Activated CD4-positive, alpha-beta T cell treated with anti-CD3 and anti-CD28 coated beads for 36 hours (primary cell): ENCODE measurements at regions of chr1 and their contacts with region 1.

Region 1: GRCh38 chr1:150363426-150364230 is at the start of gene RPRD2:
- DNase-seq: peak; percentile 99
- ATAC-seq: peak; percentile 95
- H3K4me3 Mint-ChIP-seq: peak within 1 kb of the TSS; percentile 91
- H3K27ac Mint-ChIP-seq: peak within 1 kb of the TSS; percentile 99
- H3K4me1 Mint-ChIP-seq: peaks cover 13% of the 10 kb centered on the region
- H3K27me3 Mint-ChIP-seq: no peaks in the 10 kb centered on the region
- total RNA-seq, gene RPRD2: 24.4 to 32.2 TPM

Region 2: GRCh38 chr1:150221552-150221951 is 142.1 kb before region 1 on chr1:
- CTCF ChIA-PET with region 1: no interaction called
- POLR2A ChIA-PET with region 1: no interaction called
- intact Hi-C with region 1: no loop called
- DNase-seq: no peak
- ATAC-seq: no peak
- H3K4me3 Mint-ChIP-seq: no peak overlapping the region
- H3K27ac Mint-ChIP-seq: no peak overlapping the region
- H3K4me1 Mint-ChIP-seq: no peaks in the 10 kb centered on the region
- H3K27me3 Mint-ChIP-seq: no peaks in the 10 kb centered on the region

Region 3: GRCh38 chr1:150268705-150269403 is 94.8 kb before region 1 on chr1 and contains the start of gene APH1A:
- CTCF ChIA-PET with region 1: no interaction called
- POLR2A ChIA-PET with region 1: no interaction called
- intact Hi-C with region 1: loop called in 1 of 2 experiments (anchors 1 kb)
- DNase-seq: peak; percentile 97
- ATAC-seq: peak; percentile 99
- H3K4me3 Mint-ChIP-seq: peak within 1 kb of the TSS; percentile 89
- H3K27ac Mint-ChIP-seq: peak within 1 kb of the TSS; percentile 98
- H3K4me1 Mint-ChIP-seq: peaks cover 25% of the 10 kb centered on the region
- H3K27me3 Mint-ChIP-seq: no peaks in the 10 kb centered on the region
- total RNA-seq, gene APH1A: 62.4 to 89.3 TPM

Region 4: GRCh38 chr1:150321826-150322166 is 41.8 kb before region 1 on chr1:
- CTCF ChIA-PET with region 1: interaction called, 4 read pairs
- POLR2A ChIA-PET with region 1: interaction called, 9 read pairs
- intact Hi-C with region 1: loop called (anchors 1 to 2 kb)
- DNase-seq: no peak
- ATAC-seq: no peak
- H3K4me3 Mint-ChIP-seq: peak overlapping the region; percentile 93
- H3K27ac Mint-ChIP-seq: peak overlapping the region; percentile 100
- H3K4me1 Mint-ChIP-seq: peaks cover 27% of the 10 kb centered on the region
- H3K27me3 Mint-ChIP-seq: no peaks in the 10 kb centered on the region

Region 5: GRCh38 chr1:150444232-150444631 is 80.6 kb after region 1 on chr1:
- CTCF ChIA-PET with region 1: no interaction called
- POLR2A ChIA-PET with region 1: interaction called, 3 read pairs
- intact Hi-C with region 1: loop called in 1 of 2 experiments (anchors 5 kb)
- DNase-seq: peak; percentile 23
- ATAC-seq: peak; percentile 86
- H3K4me3 Mint-ChIP-seq: no peak overlapping the region
- H3K27ac Mint-ChIP-seq: peak overlapping the region; percentile 56
- H3K4me1 Mint-ChIP-seq: peaks cover 8% of the 10 kb centered on the region
- H3K27me3 Mint-ChIP-seq: no peaks in the 10 kb centered on the region

Region 6: DNA sequence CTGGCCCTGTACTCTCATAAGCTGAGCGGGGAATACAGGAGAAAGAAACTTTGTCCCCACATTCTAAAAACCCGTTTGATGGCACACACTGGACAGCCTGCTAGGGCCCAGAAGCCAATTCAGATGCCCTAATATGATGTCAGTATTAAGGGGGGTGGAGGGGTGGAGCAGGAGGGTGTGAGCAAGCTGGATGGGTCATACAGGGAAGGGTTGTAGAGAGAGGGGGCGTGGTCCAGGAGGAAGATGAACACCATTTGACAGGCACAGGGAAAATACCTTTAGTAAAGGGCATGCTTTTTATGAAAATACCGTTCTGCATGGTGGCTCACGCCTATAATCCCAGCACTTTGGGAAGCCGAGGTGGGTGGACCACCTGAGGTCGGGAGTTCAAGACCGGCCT is 129.5 kb after region 1 on chr1:
- CTCF ChIA-PET with region 1: no interaction called
- POLR2A ChIA-PET with region 1: no interaction called
- intact Hi-C with region 1: no loop called
- DNase-seq: no peak
- ATAC-seq: no peak
- H3K4me3 Mint-ChIP-seq: no peak overlapping the region
- H3K27ac Mint-ChIP-seq: no peak overlapping the region
- H3K4me1 Mint-ChIP-seq: peaks cover 3% of the 10 kb centered on the region
- H3K27me3 Mint-ChIP-seq: no peaks in the 10 kb centered on the region

Region 7: GRCh38 chr1:150515328-150516048 is 151.9 kb after region 1 on chr1 and contains the start of gene FALEC:
- CTCF ChIA-PET with region 1: no interaction called
- POLR2A ChIA-PET with region 1: no interaction called
- intact Hi-C with region 1: loop called in 1 of 2 experiments (anchors 1 kb)
- DNase-seq: peak; percentile 95
- ATAC-seq: peak; percentile 99
- H3K4me3 Mint-ChIP-seq: peak within 1 kb of the TSS; percentile 80
- H3K27ac Mint-ChIP-seq: peak within 1 kb of the TSS; percentile 59
- H3K4me1 Mint-ChIP-seq: peaks cover 10% of the 10 kb centered on the region
- H3K27me3 Mint-ChIP-seq: no peaks in the 10 kb centered on the region
- total RNA-seq, gene FALEC: 0.34 TPM in 1 of 2 experiments, not detected in the other

Region 8: DNA sequence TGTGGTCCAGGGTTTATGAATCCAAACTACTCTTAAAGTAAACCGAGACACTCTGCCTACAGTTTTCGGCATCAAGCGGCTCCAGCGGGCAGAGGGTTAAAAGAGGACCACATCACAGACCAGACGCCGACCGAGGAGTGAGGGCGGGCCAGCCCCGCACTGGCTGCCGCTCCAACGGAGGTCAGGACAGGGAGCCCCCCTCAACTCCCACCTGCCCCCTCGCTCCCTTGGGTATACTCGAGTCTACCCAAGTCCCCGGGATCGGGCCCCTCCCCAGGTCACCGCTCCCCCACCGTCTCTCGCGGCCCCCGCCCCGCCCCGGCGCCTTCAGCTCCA is 512.5 kb after region 1 on chr1:
- CTCF ChIA-PET with region 1: no interaction called
- POLR2A ChIA-PET with region 1: no interaction called
- intact Hi-C with region 1: loop called in 1 of 2 experiments (anchors 1 kb)
- DNase-seq: no peak
- ATAC-seq: peak; percentile 37
- H3K4me3 Mint-ChIP-seq: peak overlapping the region; percentile 88
- H3K27ac Mint-ChIP-seq: peak overlapping the region; percentile 95
- H3K4me1 Mint-ChIP-seq: peaks cover 25% of the 10 kb centered on the region
- H3K27me3 Mint-ChIP-seq: no peaks in the 10 kb centered on the region